ENCODE measurements at regions of chr11 and their contacts with region 1.

Region 1: GRCh38 chr11:46238967-46239800 is 38.3 kb upstream of the CREB3L1 start:
- DNase-seq: peak; percentile 93
- ATAC-seq: peak; percentile 84

Region 2: DNA sequence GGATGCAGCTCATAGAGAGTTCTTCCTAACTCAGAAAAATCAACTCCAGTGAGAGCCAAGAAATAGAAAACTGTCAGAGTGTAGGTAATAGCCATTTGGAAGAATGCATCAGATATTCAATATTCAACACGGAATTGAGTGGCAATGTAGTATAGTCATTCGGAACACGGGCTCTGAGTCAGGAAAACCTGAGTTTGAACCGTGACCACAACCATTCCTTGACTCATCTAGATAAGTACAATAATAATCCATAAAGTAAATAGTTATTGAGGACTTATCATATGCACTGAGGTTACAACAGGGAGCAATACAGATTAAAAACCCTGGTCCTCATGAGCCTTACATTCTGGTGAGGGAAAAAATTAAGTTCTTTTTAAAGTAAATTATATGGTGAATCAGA is 55.4 kb before region 1 on chr11:
- intact Hi-C with region 1: no loop called
- DNase-seq: no peak
- ATAC-seq: no peak

Region 3: GRCh38 chr11:46308631-46309419 is 69.6 kb after region 1 on chr11:
- intact Hi-C with region 1: loop called (anchors 5 kb)
- DNase-seq: peak; percentile 90
- ATAC-seq: peak; percentile 85